ENCODE measurements at regions of chr4 and their contacts with region 1.

Region 1: DNA sequence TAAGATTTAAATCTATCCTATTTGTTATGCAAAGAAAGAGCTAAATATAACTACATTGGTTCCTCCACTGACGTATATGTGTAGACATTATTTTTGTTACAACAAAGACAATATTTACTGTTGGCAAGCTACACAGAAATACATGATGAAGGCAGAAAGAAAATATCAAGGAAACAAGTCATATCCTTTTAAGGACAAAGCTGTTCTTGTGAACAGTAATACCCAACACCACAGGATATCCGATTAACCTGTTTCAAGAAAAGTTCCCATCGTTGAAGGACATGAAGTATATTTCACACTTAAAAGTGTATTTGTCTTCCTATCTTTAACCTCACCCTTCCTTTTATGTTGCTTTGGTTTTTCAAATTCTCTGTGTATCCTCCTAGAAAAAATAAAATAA is 235.8 kb upstream of the AADAT start:
- DNase-seq: no peak
- ATAC-seq: no peak
- H3K4me3 ChIP-seq: no peak overlapping the region
- H3K27ac ChIP-seq: no peak overlapping the region
- H3K4me1 ChIP-seq: no peaks in the 10 kb centered on the region
- H3K27me3 ChIP-seq: no peaks in the 10 kb centered on the region
- CTCF ChIP-seq: no peak
- POLR2A ChIP-seq: no peak
- RAD21 ChIP-seq: no peak

Region 2: GRCh38 chr4:170352231-170352630 is 26.6 kb after region 1 on chr4:
- CTCF ChIA-PET with region 1: no interaction called
- POLR2A ChIA-PET with region 1: no interaction called
- RAD21 ChIA-PET with region 1: no interaction called
- intact Hi-C with region 1: loop called (anchors 1 kb)
- DNase-seq: no peak
- ATAC-seq: no peak
- H3K4me3 ChIP-seq: no peak overlapping the region
- H3K27ac ChIP-seq: no peak overlapping the region
- H3K4me1 ChIP-seq: no peaks in the 10 kb centered on the region
- H3K27me3 ChIP-seq: no peaks in the 10 kb centered on the region
- CTCF ChIP-seq: no peak
- POLR2A ChIP-seq: no peak
- RAD21 ChIP-seq: no peak

Measured in HCT116 (cell line).